SK-N-SH (cell line): ENCODE measurements at regions of chr1 and their contacts with region 1.

Region 1: GRCh38 chr1:157505481-157506272 is 46.6 kb downstream of the FCRL5 start:
- DNase-seq: peak; percentile 50
- H3K4me3 ChIP-seq: peak overlapping the region in 1 of 2 experiments; percentile 36; a peak in 1 of 4 replicates
- H3K27ac ChIP-seq: no peak overlapping the region
- H3K4me1 ChIP-seq: no peaks in the 10 kb centered on the region
- H3K27me3 ChIP-seq: peaks cover 7% of the 10 kb centered on the region; the same call in 1 of the 2 replicates
- CTCF ChIP-seq: peak; percentile 66
- EP300 ChIP-seq: no peak
- RAD21 ChIP-seq: peak; percentile 51

Region 2: GRCh38 chr1:157450106-157450505 is 55.6 kb before region 1 on chr1:
- CTCF ChIA-PET with region 1: no interaction called
- POLR2A ChIA-PET with region 1: no interaction called
- DNase-seq: no peak
- H3K4me3 ChIP-seq: no peak overlapping the region
- H3K27ac ChIP-seq: no peak overlapping the region
- H3K4me1 ChIP-seq: no peaks in the 10 kb centered on the region
- H3K27me3 ChIP-seq: peaks cover 8% of the 10 kb centered on the region; the same call in 1 of the 2 replicates
- CTCF ChIP-seq: no peak
- EP300 ChIP-seq: no peak
- RAD21 ChIP-seq: no peak

Region 3: DNA sequence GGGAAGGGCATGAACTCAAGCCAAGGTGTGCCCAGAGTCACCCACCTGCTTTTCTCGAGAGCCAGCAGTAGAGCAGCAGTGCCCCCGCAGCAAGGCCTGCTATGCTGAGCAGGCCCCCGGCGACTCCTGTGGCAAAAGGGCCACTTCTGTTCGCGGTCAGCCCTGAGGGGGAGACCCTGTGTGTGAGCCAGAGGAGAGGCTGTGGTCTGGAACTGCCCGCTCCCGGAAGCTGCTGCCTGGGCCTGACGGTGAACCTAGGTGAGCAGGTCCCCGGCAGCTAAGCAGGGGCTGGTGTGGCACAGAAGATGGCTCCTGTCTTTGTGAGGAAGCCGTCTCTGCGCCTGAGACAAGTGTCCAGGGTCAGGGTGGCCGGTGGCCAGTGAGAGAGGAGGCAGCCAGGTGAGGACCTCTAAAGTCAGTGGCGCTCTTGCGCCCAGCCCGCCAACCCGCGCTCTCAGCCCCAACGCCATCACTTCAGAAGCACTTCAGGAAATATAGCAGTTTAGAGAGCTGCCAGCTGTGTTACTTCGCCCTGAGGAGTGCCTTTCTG is 14.8 kb after region 1 on chr1:
- CTCF ChIA-PET with region 1: interaction called, 14 read pairs
- POLR2A ChIA-PET with region 1: no interaction called
- DNase-seq: no peak
- H3K4me3 ChIP-seq: no peak overlapping the region
- H3K27ac ChIP-seq: no peak overlapping the region
- H3K4me1 ChIP-seq: no peaks in the 10 kb centered on the region
- H3K27me3 ChIP-seq: peaks cover 42% of the 10 kb centered on the region
- CTCF ChIP-seq: no peak
- EP300 ChIP-seq: no peak
- RAD21 ChIP-seq: no peak

Region 4: GRCh38 chr1:157652859-157653493 is 147.3 kb after region 1 on chr1:
- CTCF ChIA-PET with region 1: no interaction called
- POLR2A ChIA-PET with region 1: no interaction called
- DNase-seq: no peak
- H3K4me3 ChIP-seq: no peak overlapping the region
- H3K27ac ChIP-seq: no peak overlapping the region
- H3K4me1 ChIP-seq: no peaks in the 10 kb centered on the region
- H3K27me3 ChIP-seq: no peaks in the 10 kb centered on the region; the same call in none of the 2 replicates
- CTCF ChIP-seq: no peak
- EP300 ChIP-seq: no peak
- RAD21 ChIP-seq: no peak